Esophagus squamous epithelium (tissue), 5 donors: ENCODE measurements at regions of chr18 and their contacts with region 1.

Region 1: GRCh38 chr18:44679056-44679905 is 1.4 kb upstream of the SETBP1 start:
- DNase-seq: peak; percentile 37
- H3K4me3 ChIP-seq: peak overlapping the region; percentile 66 to 92 (median 78)
- H3K27ac ChIP-seq: peak overlapping the region; percentile 90 to 96 (median 95)
- H3K4me1 ChIP-seq: peaks cover 0 to 47% (median 0%) of the 10 kb centered on the region in 3 donors
- H3K27me3 ChIP-seq: peaks cover 0 to 21% (median 0%) of the 10 kb centered on the region in 4 donors
- CTCF ChIP-seq: peak; percentile 29 to 75 (median 64)
- POLR2A ChIP-seq: peak in 2 of 4 donors; percentile 76

Region 2: DNA sequence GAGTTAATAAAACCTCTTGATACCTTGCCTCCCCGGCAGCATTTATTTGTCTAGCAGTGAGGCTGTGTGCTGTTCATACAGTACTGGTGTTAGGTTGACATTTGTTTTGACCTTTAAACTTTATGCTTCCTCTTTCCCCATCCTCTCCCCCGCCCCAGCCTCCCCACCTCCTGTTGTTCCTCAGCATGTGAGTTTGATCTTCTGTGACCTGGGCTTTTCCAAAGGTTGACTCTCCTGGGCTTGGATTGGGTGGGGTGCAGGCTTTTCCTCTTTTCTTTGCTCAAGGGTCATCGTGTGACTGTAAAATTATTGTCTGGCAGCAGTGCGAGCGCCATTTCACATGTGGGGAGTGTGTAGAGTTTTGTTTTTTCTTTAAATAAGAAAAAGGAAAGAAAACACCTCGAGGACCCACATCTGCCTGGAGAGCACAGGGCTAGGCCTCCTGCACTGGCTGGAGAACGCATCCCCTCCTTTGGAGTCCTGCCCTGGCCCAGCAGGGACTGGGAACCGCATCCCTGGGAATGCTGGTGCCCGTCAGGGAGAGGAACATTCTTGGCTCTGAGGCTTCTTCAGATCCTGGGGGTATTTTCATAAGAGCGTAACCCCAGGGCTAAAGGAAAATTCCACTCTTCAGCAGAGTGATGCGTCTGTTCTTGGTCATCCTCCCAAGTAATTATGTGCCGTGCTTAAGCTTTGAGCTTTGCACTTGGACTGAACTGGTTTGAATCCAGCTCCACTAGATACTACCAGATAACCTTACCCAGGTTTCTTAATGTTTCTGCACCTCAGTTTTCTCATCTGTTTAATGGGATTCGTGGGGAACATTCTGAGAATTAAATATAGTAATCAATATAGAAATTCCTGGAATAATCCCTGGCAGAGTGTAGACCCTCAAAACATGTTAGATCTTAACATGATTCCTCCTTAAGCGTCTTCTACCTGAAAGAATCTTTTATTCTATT is 93.0 kb after region 1 on chr18:
- intact Hi-C with region 1: no loop called
- DNase-seq: no peak
- H3K4me3 ChIP-seq: no peak overlapping the region
- H3K27ac ChIP-seq: peak overlapping the region in 3 of 4 donors; percentile 4 to 38 (median 27)
- H3K4me1 ChIP-seq: peaks cover 0 to 17% (median 0%) of the 10 kb centered on the region in 3 donors
- H3K27me3 ChIP-seq: no peaks in the 10 kb centered on the region
- CTCF ChIP-seq: no peak
- POLR2A ChIP-seq: no peak

Region 3: DNA sequence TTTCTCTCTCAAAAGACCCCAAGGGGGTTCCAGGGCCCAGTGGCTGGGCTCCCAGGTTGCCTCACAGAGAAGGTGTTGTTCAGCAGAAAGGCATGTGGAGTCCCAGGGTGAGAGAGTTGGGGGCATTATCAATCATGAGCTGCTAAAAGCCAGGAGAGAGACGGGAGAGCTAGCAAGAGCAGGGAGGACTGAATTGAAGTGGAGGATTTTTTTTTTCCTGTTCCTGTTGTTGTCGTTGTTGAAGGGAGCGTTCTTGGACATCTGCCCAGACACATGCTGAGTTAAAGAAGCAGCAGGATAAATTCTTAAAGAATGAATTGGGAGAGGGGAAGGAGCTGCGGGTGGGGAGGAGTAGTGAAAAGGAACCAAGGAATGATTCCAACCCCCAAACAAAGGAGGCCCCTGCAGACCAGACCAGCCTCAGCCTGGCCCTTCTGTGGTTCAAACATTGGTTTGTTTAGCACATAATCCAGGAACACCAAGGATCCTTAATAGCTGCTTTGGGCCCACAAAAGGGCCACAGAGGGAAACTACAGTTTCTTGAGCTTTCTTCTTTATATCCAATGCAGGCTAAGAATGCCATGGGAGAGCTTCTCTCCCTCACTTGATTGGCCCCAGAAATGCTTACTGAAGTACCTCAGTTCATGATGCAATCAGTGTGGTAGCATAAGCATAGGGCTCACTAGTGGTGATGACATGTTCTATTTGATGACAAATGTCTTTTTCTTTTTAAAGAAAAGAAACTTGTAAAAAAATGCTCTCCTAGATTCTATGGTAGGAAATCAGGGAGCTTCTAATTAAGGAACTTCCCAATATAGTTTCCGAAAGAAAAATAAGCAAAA is 147.4 kb after region 1 on chr18:
- intact Hi-C with region 1: loop called (anchors 10 kb)
- DNase-seq: no peak
- H3K4me3 ChIP-seq: no peak overlapping the region
- H3K27ac ChIP-seq: peak overlapping the region; percentile 54 to 80 (median 68)
- H3K4me1 ChIP-seq: peaks cover 17 to 57% (median 23%) of the 10 kb centered on the region in 3 donors
- H3K27me3 ChIP-seq: no peaks in the 10 kb centered on the region
- CTCF ChIP-seq: no peak
- POLR2A ChIP-seq: no peak

Region 4: DNA sequence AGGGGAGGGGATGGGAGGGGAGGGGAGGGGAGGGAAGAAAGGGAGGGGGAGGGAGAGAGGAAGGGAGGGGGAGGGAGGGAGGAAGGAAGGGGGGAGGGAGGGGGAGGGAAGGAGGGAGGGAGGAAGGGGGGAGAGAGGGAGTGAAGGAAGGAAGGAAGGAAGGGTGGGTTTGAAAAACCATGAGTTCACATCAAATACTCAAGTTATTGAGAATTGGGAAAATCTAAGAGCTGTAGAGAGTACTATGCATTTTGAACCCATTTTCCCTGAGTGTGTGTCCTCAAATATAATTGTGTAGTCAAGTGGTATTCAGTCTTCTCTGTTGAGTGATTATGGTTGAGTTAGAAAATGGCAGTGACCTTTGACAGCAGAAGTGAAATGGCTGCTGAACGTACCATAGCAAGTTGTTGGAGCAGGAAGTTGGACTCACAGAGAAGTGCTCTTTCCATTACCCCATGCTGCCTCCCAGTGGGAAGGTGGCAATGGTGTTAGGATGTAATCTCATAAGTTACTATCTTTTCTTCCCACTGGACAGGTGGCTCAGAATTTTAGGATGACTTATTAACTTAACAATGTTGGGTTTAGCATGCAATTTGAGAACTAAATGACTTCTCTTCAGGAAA is 216.0 kb after region 1 on chr18:
- intact Hi-C with region 1: loop called (anchors 10 kb)
- DNase-seq: no peak
- H3K4me3 ChIP-seq: no peak overlapping the region
- H3K27ac ChIP-seq: no peak overlapping the region
- H3K4me1 ChIP-seq: peaks cover 8 to 25% (median 13%) of the 10 kb centered on the region in 3 donors
- H3K27me3 ChIP-seq: peaks cover 0 to 10% (median 0%) of the 10 kb centered on the region in 4 donors
- CTCF ChIP-seq: peak in 5 of 6 experiments; percentile 19 to 74 (median 34)
- POLR2A ChIP-seq: no peak

Region 5: GRCh38 chr18:45212181-45213039 is 533.1 kb after region 1 on chr18:
- intact Hi-C with region 1: loop called (anchors 10 kb)
- DNase-seq: peak; percentile 28
- H3K4me3 ChIP-seq: no peak overlapping the region
- H3K27ac ChIP-seq: no peak overlapping the region
- H3K4me1 ChIP-seq: no peaks in the 10 kb centered on the region
- H3K27me3 ChIP-seq: no peaks in the 10 kb centered on the region
- CTCF ChIP-seq: peak; percentile 64 to 95 (median 85)
- POLR2A ChIP-seq: no peak